ENCODE measurements at regions of chr11 and their contacts with region 1.

Region 1: DNA sequence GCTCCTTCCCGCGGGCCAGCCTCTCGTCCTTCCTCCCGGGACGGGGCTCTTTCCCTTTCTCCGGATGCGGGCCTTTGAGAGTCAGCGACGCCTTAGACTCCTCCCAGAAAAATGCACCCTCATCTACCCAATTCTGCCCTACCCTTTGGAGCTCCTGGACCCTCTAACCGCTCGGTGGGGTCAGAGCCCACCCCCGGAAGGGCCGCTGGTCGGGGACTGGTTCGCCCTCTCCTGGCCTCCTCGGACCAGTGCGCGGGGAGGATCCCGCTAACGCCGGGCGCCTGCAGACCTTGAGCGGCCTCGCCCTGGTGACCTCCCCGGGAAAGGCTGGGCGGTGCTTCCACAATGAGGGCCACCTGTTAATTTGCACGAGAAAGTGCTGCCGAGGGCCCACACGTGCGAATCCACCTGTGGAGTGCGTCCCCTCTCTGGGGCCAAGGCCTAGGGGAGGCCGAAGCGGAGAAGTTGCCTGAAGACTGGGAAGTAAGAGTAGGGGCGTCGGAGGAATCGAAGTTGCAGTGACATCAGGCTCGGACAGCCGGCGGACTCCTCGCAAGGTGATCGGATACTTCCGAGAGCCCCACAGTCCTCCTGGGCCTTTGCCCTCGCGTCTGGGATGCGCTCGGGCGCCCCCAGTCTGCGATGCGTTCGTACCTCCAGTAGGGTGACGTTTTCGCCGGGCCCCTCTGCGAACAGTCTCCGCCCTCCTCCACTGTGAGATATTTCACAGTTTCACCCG is 61.5 kb downstream of the ENDOD1 start:
- DNase-seq: peak; percentile 86
- ATAC-seq: peak; percentile 89
- H3K4me3 ChIP-seq: peak overlapping the region; percentile 57 to 70
- H3K27ac ChIP-seq: peak overlapping the region; percentile 70
- H3K4me1 ChIP-seq: peaks cover 23% of the 10 kb centered on the region
- H3K27me3 ChIP-seq: no peaks in the 10 kb centered on the region
- CTCF ChIP-seq: peak; percentile 97

Region 2: DNA sequence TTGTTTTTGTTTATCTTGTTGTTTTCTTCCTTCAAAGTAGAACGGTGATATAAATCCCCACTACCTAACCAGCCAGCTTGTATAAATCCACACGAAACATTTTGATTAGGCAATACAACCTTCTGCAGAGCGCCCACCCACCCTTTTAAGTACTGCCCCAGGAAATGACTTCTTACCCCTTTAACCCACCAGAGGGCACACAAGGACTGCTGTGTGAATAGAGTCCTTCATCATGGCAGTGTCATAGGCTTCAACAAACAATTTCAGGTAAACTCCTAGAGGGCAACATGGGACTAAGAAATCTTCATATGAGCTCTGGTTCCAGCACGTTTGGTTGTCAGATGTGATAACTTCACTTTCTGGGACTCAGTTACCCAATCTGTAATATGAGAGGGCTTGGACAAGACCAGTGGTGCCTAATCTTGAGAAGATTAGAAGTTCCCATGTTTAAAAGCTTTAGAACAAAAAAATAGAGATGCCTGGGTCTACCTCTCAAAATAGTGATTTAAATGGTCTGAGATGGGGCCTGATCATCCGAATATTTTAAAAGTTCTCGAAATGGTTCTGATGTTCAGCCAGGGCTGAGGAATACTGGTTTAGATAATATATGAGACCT is 527.9 kb before region 1 on chr11:
- CTCF ChIA-PET with region 1: no interaction called
- POLR2A ChIA-PET with region 1: no interaction called
- in situ Hi-C with region 1: no loop called
- intact Hi-C with region 1: loop called (anchors 10 kb)
- DNase-seq: peak; percentile 78
- ATAC-seq: peak; percentile 94
- H3K4me3 ChIP-seq: no peak overlapping the region
- H3K27ac ChIP-seq: peak overlapping the region; percentile 3; the same call in 1 of the 2 replicates
- H3K4me1 ChIP-seq: no peaks in the 10 kb centered on the region
- H3K27me3 ChIP-seq: no peaks in the 10 kb centered on the region
- CTCF ChIP-seq: peak; percentile 87

Region 3: GRCh38 chr11:94988748-94989147 is 162.4 kb before region 1 on chr11:
- CTCF ChIA-PET with region 1: no interaction called
- POLR2A ChIA-PET with region 1: interaction called, 11 read pairs
- in situ Hi-C with region 1: no loop called
- intact Hi-C with region 1: no loop called
- DNase-seq: no peak
- ATAC-seq: no peak
- H3K4me3 ChIP-seq: no peak overlapping the region
- H3K27ac ChIP-seq: no peak overlapping the region
- H3K4me1 ChIP-seq: no peaks in the 10 kb centered on the region
- H3K27me3 ChIP-seq: peaks cover 21% of the 10 kb centered on the region
- CTCF ChIP-seq: no peak

Region 4: DNA sequence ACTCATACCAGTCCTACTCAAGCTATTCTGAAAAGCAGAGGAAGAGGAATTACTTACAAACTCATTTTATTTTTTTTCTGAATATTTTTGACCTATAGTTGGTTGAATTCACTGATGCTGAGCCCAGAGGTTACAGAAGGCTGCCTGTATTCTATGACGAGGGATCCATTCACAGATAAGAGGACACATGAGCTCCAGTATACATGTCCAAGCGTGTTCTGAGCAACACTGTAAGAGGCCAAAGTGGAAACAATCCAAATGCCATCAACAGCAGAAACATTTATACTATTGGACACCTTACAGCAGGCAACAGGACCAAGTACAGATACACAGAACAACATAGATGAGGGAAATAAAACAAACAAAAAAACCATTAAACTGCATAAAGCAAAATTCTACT is 115.8 kb before region 1 on chr11:
- CTCF ChIA-PET with region 1: no interaction called
- POLR2A ChIA-PET with region 1: no interaction called
- in situ Hi-C with region 1: no loop called
- intact Hi-C with region 1: no loop called
- DNase-seq: no peak
- ATAC-seq: no peak
- H3K4me3 ChIP-seq: no peak overlapping the region
- H3K27ac ChIP-seq: no peak overlapping the region
- H3K4me1 ChIP-seq: no peaks in the 10 kb centered on the region
- H3K27me3 ChIP-seq: peaks cover 18% of the 10 kb centered on the region; the same call in 1 of the 2 replicates
- CTCF ChIP-seq: no peak

Region 5: GRCh38 chr11:95705485-95706124 is 554.5 kb after region 1 on chr11:
- CTCF ChIA-PET with region 1: interaction called, 9 read pairs
- POLR2A ChIA-PET with region 1: no interaction called
- in situ Hi-C with region 1: no loop called
- intact Hi-C with region 1: loop called (anchors 2 kb)
- DNase-seq: peak; percentile 61
- ATAC-seq: peak; percentile 96
- H3K4me3 ChIP-seq: no peak overlapping the region
- H3K27ac ChIP-seq: no peak overlapping the region
- H3K4me1 ChIP-seq: no peaks in the 10 kb centered on the region; the same call in 1 of the 2 replicates
- H3K27me3 ChIP-seq: peaks cover 43% of the 10 kb centered on the region
- CTCF ChIP-seq: peak; percentile 97

Region 6: DNA sequence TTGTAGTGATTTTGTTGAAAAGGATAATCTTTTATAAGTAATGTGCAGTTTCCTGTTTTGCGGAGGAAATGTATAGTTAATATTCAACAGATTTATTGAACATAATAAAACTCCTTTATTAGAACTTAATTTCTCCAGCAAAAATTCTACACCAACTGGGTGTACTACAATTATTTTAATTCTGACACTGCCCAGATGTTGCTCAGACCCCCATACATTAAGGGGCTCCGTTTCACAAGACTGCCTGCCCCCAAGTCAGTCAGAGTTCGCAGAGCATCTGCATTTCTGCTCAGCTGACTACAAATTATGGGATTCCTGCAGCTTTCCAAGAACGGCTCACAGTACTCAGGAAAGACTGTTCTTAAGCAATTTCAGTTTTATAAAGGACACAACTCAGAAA is 645.4 kb after region 1 on chr11:
- CTCF ChIA-PET with region 1: interaction called, 15 read pairs
- POLR2A ChIA-PET with region 1: no interaction called
- in situ Hi-C with region 1: no loop called
- intact Hi-C with region 1: no loop called
- DNase-seq: no peak
- ATAC-seq: no peak
- H3K4me3 ChIP-seq: no peak overlapping the region
- H3K27ac ChIP-seq: no peak overlapping the region
- H3K4me1 ChIP-seq: peaks cover 21% of the 10 kb centered on the region
- H3K27me3 ChIP-seq: no peaks in the 10 kb centered on the region
- CTCF ChIP-seq: no peak